AG04449 (cell line): ENCODE measurements at regions of chr6 and their contacts with region 1.

Region 1: DNA sequence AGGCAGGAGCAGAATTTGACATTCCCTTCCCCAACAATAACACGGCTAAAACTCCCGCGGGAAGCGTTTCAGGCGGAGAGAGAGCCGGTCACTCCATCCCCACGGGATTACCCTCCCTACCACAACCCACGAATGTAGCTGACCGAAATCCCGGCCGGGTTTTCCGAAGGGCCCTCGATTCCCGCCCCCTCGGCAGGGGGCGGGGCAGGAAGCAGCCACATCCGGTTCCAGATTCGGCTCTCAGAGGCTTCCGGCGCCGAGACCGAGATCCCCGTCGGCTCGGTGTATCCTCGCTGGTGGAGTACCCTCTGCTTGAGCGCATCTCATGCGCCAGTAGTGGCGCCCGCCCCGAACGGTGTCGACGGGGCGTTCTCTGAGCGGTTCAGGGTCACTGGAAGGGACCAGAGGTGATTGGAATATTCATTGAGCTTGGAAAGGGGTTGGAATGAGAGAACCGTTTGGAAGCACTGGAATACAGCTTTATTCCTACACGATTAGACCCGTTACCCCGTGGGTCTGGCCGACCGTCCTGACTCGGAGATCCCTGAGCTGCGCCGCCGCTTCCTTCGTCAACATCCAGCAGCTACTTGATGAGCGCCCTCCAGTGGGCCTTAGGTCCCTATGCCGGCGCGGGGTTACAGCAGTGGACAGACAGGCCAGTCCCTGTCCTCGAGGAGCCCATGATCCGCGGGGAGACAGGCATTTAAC is 649 bp upstream of the RGL2 start:
- DNase-seq: no peak
- H3K4me3 ChIP-seq: peak overlapping the region; percentile 85
- CTCF ChIP-seq: peak; percentile 88

Region 2: DNA sequence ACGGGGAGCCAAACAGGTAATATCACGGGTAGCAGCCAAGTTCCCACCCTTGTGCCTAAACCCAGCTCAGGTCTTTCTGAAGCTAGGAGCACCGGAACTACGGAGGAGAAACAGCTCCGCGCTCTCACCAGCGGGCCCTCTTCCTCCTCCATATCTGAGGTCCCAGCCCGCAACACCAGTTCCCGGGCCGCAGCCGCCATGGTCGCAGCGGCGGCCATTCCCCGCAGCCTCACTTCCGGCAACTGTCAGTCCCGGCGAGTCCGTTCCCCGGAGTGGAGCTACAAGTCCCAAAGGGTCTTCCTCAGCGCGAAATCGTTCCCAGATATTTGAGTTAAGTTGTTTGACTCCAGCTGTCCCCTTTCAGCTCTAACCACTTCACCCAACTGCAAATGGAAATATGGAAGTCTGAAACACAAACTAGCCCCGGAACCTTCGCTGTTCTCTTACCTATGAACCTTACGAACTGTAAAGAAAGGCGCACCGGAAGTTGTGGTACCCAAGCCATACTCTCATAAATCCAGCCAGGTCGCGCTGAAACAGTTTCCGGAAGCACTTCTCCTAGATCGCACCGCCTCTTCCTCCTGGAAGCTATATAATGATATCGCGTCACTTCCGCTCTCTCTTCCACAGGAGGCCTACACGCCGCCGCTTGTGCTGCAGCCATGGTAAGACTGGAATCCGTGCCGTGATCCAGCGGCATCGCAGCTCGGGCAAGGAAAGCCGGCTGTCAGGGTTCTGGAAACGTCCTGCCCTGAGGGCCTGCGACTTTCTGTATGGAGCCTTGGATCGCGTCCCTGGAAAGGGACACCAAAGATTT is 27.7 kb before region 1 on chr6 and contains the starts of genes RPS18 and VPS52:
- CTCF ChIA-PET with region 1: interaction called, 3 read pairs
- POLR2A ChIA-PET with region 1: interaction called, 16 read pairs
- DNase-seq: peak; percentile 96
- H3K4me3 ChIP-seq: peak within 1 kb of the TSS; percentile 93
- CTCF ChIP-seq: no peak

Region 3: GRCh38 chr6:33312409-33313158 is 13.2 kb after region 1 on chr6:
- CTCF ChIA-PET with region 1: interaction called, 37 read pairs
- POLR2A ChIA-PET with region 1: interaction called, 13 read pairs
- DNase-seq: no peak
- H3K4me3 ChIP-seq: peak overlapping the region; percentile 96
- CTCF ChIP-seq: no peak

Region 4: GRCh38 chr6:33317669-33318425 is 18.5 kb after region 1 on chr6 and contains the start of gene ZBTB22:
- CTCF ChIA-PET with region 1: interaction called, 37 read pairs
- POLR2A ChIA-PET with region 1: interaction called, 13 read pairs
- DNase-seq: peak; percentile 95
- H3K4me3 ChIP-seq: peak within 1 kb of the TSS; percentile 67
- CTCF ChIP-seq: no peak

Region 5: GRCh38 chr6:33744001-33744848 is 444.8 kb after region 1 on chr6:
- CTCF ChIA-PET with region 1: no interaction called
- POLR2A ChIA-PET with region 1: no interaction called
- DNase-seq: no peak
- H3K4me3 ChIP-seq: no peak overlapping the region
- CTCF ChIP-seq: peak; percentile 90